PC-3 (cell line): ENCODE measurements at regions of chr20 and their contacts with region 1.

Region 1: DNA sequence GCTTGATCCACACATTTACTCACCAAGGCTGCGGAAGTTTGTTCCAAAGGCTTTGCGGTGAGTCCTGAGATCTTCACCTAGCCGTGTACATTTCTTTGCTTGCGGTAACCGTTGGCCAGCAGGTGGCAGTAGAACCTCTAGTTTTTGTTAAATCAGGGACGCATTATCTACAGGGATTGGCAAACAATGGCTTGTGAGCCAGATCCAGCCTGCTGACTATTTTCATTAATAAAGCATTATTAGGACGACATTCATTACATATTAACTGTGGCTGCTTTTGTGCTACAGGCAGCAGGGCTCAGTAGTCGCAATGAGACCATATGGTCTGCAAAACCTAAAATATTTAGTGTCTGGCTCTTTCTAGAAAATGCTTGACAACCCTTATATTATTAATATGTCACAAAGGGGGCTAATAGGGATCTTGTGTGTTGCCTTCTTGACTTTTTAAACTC is 174.1 kb downstream of the DOK5 start:
- DNase-seq: peak; percentile 95
- ATAC-seq: peak; percentile 92
- H3K4me3 ChIP-seq: no peak overlapping the region
- H3K27ac ChIP-seq: no peak overlapping the region
- H3K4me1 ChIP-seq: no peaks in the 10 kb centered on the region
- H3K27me3 ChIP-seq: peaks cover 37% of the 10 kb centered on the region
- CTCF ChIP-seq: peak; percentile 95

Region 2: GRCh38 chr20:53786445-53787267 is 862.9 kb before region 1 on chr20:
- CTCF ChIA-PET with region 1: no interaction called
- POLR2A ChIA-PET with region 1: no interaction called
- intact Hi-C with region 1: no loop called
- DNase-seq: peak; percentile 71
- ATAC-seq: peak; percentile 46
- H3K4me3 ChIP-seq: peak overlapping the region; percentile 27
- H3K27ac ChIP-seq: peak overlapping the region; percentile 87
- H3K4me1 ChIP-seq: peaks cover 58% of the 10 kb centered on the region
- H3K27me3 ChIP-seq: no peaks in the 10 kb centered on the region
- CTCF ChIP-seq: peak; percentile 39

Region 3: DNA sequence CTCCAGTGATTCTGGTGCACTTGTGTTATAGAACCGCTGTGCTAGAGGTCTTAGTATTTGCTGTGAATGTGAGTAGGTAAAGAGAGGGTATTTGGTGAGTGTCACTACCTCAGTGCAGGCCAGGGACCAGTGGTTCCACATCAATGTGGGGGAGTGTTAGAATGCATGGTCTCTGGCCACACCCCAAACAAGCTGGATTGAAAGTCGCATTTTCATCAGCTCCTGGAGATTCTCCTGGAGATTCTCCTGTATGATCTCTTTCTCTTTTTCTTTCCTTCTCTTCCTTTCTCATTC is 552.4 kb before region 1 on chr20:
- CTCF ChIA-PET with region 1: no interaction called
- POLR2A ChIA-PET with region 1: no interaction called
- intact Hi-C with region 1: loop called (anchors 5 kb)
- DNase-seq: no peak
- ATAC-seq: peak; percentile 23
- H3K4me3 ChIP-seq: no peak overlapping the region
- H3K27ac ChIP-seq: no peak overlapping the region
- H3K4me1 ChIP-seq: no peaks in the 10 kb centered on the region
- H3K27me3 ChIP-seq: no peaks in the 10 kb centered on the region
- CTCF ChIP-seq: no peak

Region 4: DNA sequence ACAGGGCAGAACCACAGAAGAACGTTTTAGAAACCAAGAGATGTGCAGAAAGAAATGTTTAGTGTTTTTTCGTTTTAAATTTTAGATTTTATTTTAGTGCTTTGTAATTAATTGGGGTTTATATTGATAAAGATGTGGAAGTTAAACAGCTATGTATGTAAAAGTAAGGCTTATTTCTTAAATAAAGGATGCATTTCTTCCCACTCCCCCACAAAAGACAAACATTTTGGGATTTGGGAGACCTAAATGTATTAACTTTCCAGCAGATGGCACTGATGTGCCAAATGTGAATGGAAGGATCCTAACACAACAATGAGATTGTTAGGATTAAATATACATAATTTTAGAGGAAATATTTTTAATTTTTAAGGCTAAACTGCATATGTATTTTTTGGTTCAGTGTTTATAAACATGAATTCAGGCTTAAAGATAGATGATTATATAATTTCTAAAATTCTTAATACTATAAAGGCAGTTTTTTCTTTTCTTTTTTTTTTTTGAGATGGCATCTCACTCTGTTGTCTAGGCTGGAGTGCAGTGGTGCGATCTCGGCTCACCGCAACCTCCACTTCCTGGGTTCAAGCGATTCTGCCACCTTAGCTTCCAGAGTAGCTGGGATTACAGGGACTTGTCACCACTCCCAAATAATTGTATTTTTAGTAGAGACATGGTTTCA is 429.6 kb before region 1 on chr20:
- CTCF ChIA-PET with region 1: no interaction called
- POLR2A ChIA-PET with region 1: no interaction called
- intact Hi-C with region 1: loop called (anchors 1 kb)
- DNase-seq: peak; percentile 83
- ATAC-seq: peak; percentile 49; the same call in 1 of the 2 replicates
- H3K4me3 ChIP-seq: no peak overlapping the region
- H3K27ac ChIP-seq: no peak overlapping the region
- H3K4me1 ChIP-seq: no peaks in the 10 kb centered on the region
- H3K27me3 ChIP-seq: no peaks in the 10 kb centered on the region
- CTCF ChIP-seq: peak; percentile 87

Region 5: GRCh38 chr20:55069951-55070350 is 420.4 kb after region 1 on chr20:
- CTCF ChIA-PET with region 1: no interaction called
- POLR2A ChIA-PET with region 1: no interaction called
- intact Hi-C with region 1: no loop called
- DNase-seq: no peak
- ATAC-seq: no peak
- H3K4me3 ChIP-seq: no peak overlapping the region
- H3K27ac ChIP-seq: no peak overlapping the region
- H3K4me1 ChIP-seq: no peaks in the 10 kb centered on the region
- H3K27me3 ChIP-seq: no peaks in the 10 kb centered on the region
- CTCF ChIP-seq: no peak